K562 (cell line): ENCODE measurements at regions of chr2 and their contacts with region 1.

Region 1: DNA sequence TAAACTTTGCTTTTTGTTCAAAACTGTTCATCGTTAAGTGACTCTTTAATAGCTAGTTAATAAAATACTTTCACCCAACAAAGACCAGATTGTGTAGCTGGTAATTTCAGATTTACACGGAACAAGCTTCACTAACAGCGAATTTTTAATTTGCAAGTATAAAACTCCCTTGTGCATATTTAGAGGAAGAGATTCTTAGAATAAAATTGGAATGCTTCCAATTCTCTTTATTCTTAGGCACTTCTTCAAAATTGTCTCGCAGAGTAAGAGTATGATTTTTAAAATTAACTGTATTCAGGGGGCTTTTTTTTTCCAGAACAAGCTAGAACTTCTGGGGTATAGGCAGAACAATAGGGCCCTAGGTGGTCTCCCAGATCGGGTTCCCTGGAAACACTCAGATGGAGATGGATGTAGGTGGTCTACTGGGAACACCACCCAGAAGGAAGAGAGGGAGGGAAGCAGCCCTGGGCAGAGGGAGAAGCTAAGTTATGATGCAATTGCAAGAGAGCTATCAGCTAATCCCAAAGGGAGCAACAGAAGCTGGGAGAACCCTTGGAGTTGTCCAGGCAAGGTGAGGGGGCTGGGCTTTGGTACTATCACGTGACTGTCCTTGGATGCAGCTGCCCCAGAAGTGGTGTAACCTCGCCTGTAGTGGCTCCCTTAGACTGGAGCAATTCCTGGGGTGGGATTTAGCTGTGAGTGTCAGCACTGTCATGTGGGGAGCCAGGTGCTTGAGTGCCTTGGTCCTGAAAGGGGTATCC is 151.7 kb upstream of the ASB18 start:
- DNase-seq: no peak
- ATAC-seq: no peak
- H3K4me3 ChIP-seq: no peak overlapping the region
- H3K27ac ChIP-seq: no peak overlapping the region
- H3K4me1 ChIP-seq: no peaks in the 10 kb centered on the region
- H3K27me3 ChIP-seq: no peaks in the 10 kb centered on the region
- CTCF ChIP-seq: no peak
- EP300 ChIP-seq: no peak
- POLR2A ChIP-seq: no peak
- RAD21 ChIP-seq: no peak

Region 2: DNA sequence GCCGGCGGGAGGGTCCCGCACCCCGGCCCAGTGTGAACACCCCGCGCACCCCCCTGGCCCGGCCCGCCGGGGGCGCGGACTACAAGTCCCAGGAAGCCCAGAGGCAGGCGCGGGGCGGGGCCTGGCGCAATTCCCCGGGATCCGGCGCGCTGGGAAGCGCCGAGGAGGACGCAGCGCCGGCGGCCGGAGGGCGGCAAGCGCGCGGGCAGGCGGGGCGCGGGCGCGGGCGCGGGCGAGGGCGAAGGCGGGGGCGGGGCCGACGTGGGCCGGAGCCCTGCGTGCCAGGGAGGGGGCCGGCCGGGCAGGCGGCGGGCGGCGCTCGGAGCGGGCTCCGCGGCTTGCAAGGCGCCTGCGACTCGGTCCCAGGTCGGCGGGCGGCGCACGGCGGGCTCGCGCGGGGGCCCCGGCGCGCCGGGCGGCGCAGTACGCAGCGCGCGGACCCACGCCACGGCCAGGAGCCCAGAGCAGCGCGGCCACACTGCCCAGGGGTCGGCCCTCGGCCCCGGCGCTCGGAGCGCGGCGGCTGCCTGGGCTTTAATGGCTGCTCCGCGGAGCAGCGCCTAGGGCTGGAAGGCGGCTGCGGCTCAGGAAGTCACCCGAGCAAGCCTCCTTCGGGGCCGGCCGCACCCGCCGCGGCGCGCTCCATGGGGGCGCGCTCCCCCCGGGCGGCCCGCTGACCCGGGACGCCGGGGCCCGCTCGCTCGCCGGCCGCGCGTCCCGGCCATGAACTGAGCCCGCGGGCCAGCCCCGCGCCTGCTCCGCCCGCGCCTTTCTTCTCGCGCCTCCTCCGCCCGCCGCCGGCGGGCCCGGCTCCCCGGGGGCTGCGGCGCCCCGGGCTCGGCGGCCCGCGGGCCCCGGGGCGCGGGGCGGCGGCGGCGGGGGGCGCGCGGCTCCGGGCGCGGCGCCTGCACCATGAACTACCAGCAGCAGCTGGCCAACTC is 921.8 kb before region 1 on chr2 and contains the start of gene AGAP1:
- CTCF ChIA-PET with region 1: no interaction called
- POLR2A ChIA-PET with region 1: no interaction called
- in situ Hi-C with region 1: no loop called
- intact Hi-C with region 1: no loop called
- DNase-seq: peak; percentile 80 to 85 (median 83)
- ATAC-seq: peak; percentile 81
- H3K4me3 ChIP-seq: peak within 1 kb of the TSS; percentile 62
- H3K27ac ChIP-seq: peak within 1 kb of the TSS; percentile 66; the same call in 2 of the 3 replicates
- H3K4me1 ChIP-seq: peaks cover 28 to 38% of the 10 kb centered on the region in 2 experiments; a peak in 4 of 5 replicates
- H3K27me3 ChIP-seq: no peaks in the 10 kb centered on the region
- CTCF ChIP-seq: no peak
- EP300 ChIP-seq: no peak
- POLR2A ChIP-seq: no peak
- RAD21 ChIP-seq: no peak
- polyA plus RNA-seq, gene AGAP1: 1.3 to 2.3 TPM

Region 3: GRCh38 chr2:236434593-236434992 is 18.7 kb after region 1 on chr2:
- CTCF ChIA-PET with region 1: no interaction called
- POLR2A ChIA-PET with region 1: no interaction called
- in situ Hi-C with region 1: no loop called
- intact Hi-C with region 1: loop called (anchors 1 kb)
- DNase-seq: no peak
- ATAC-seq: no peak
- H3K4me3 ChIP-seq: no peak overlapping the region
- H3K27ac ChIP-seq: no peak overlapping the region
- H3K4me1 ChIP-seq: no peaks in the 10 kb centered on the region
- H3K27me3 ChIP-seq: no peaks in the 10 kb centered on the region
- CTCF ChIP-seq: no peak
- EP300 ChIP-seq: no peak
- POLR2A ChIP-seq: no peak
- RAD21 ChIP-seq: no peak

Region 4: DNA sequence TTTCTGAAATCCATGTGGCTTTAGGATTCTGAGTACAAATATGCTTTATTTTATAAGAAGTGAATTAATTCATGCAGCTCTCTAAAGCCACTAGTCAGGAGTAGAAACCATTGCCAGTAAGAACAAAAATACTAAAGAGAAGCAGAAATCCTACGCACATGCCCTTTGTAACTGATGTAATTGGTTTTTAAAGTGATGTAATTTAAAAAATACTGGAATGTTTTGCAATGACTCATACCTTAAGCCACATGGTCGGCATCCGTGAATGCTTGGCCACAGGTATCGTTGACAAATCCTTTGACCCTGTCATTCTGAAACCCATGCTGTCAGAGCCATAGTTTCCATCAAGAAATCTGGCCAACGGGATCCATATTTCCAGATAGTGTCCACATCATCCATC is 367.1 kb after region 1 on chr2:
- CTCF ChIA-PET with region 1: no interaction called
- POLR2A ChIA-PET with region 1: no interaction called
- in situ Hi-C with region 1: no loop called
- intact Hi-C with region 1: no loop called
- DNase-seq: no peak
- ATAC-seq: no peak
- H3K4me3 ChIP-seq: no peak overlapping the region
- H3K27ac ChIP-seq: no peak overlapping the region
- H3K4me1 ChIP-seq: no peaks in the 10 kb centered on the region
- H3K27me3 ChIP-seq: peaks cover 0 to 4% of the 10 kb centered on the region in 2 experiments; a peak in 2 of 5 replicates
- CTCF ChIP-seq: no peak
- EP300 ChIP-seq: no peak
- POLR2A ChIP-seq: no peak
- RAD21 ChIP-seq: no peak

Region 5: GRCh38 chr2:236988690-236989624 is 573.1 kb after region 1 on chr2:
- CTCF ChIA-PET with region 1: no interaction called
- POLR2A ChIA-PET with region 1: no interaction called
- in situ Hi-C with region 1: no loop called
- intact Hi-C with region 1: no loop called
- DNase-seq: no peak
- ATAC-seq: no peak
- H3K4me3 ChIP-seq: no peak overlapping the region
- H3K27ac ChIP-seq: no peak overlapping the region
- H3K4me1 ChIP-seq: no peaks in the 10 kb centered on the region
- H3K27me3 ChIP-seq: peaks cover 0 to 22% of the 10 kb centered on the region in 2 experiments; a peak in 1 of 5 replicates
- CTCF ChIP-seq: no peak
- EP300 ChIP-seq: no peak
- POLR2A ChIP-seq: no peak
- RAD21 ChIP-seq: no peak